ENCODE measurements at regions of chr17 and their contacts with region 1.

Region 1: DNA sequence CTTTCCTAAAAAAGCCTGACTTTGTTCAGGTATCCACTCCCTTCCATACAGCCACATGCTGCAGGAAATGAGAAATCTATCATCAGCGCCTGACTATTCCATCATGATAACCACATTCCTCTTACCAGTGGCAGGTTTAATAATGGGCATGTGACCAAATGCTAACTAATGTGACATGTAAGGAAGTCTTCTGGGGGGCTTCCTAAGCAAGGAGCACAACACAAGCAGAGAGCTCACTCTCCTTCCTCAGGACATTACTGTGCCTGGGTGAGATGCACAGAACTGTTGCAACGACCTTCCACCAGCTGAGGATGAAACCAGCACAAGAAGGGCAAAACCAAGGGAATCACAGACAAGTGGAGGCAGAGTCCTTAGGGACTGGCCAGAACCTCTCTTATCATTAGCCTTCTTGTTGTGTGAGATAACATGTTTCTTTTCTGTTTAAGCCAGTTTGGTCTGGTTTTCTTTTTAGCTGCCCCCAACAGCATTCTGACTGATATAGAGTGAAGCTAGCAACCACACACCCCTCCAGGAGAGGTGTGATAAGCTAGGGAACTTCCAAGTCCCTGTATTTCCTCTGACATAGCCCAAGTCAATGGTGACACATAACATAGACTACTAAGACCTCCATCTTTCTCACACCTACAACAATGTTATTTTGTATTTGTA is 16.9 kb downstream of the MYO1D start:
- DNase-seq: no peak
- H3K4me3 ChIP-seq: no peak overlapping the region
- H3K27ac ChIP-seq: no peak overlapping the region
- H3K4me1 ChIP-seq: peaks cover 7% of the 10 kb centered on the region
- H3K27me3 ChIP-seq: no peaks in the 10 kb centered on the region
- CTCF ChIP-seq: no peak
- EP300 ChIP-seq: no peak
- POLR2A ChIP-seq: no peak

Region 2: DNA sequence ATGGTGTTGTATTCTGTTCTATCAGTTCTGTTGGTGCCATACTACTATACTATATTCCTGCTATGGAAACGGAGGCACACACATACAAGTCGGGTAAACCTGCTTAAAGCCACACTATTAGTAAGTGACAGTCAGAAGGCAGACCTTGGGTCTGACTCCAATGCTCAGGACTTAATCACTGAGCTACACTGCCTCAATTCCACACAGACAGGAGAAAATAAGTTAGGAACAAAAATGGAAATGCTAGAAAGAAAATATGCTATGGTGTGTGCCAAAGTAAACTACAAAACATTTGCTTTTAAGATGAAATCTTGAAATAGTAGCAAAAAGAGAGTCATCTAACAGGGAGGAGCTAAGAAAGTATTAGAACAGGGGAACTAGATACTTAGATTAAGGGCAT is 31.2 kb before region 1 on chr17:
- intact Hi-C with region 1: loop called in 1 of 4 experiments (anchors 5 kb)
- DNase-seq: no peak
- H3K4me3 ChIP-seq: no peak overlapping the region
- H3K27ac ChIP-seq: no peak overlapping the region
- H3K4me1 ChIP-seq: no peaks in the 10 kb centered on the region
- H3K27me3 ChIP-seq: no peaks in the 10 kb centered on the region
- CTCF ChIP-seq: no peak
- EP300 ChIP-seq: no peak
- POLR2A ChIP-seq: no peak

Measured in ovary (tissue), 10 donors.